ENCODE measurements at regions of chr22 and their contacts with region 1.

Region 1: GRCh38 chr22:45435544-45436139 is 22.1 kb downstream of the RIBC2 start:
- DNase-seq: peak; percentile 93
- H3K4me3 ChIP-seq: peak overlapping the region in 1 of 8 donors; percentile 20
- H3K27ac ChIP-seq: peak overlapping the region in 7 of 8 donors; percentile 21 to 62 (median 58)
- H3K4me1 ChIP-seq: peaks cover 8 to 15% (median 11%) of the 10 kb centered on the region in 6 donors
- H3K27me3 ChIP-seq: peaks cover 0 to 8% (median 0%) of the 10 kb centered on the region in 7 donors
- CTCF ChIP-seq: peak; percentile 96 to 99 (median 97)
- POLR2A ChIP-seq: no peak

Region 2: GRCh38 chr22:45240810-45241631 is 194.6 kb before region 1 on chr22 and contains the start of gene KIAA0930:
- intact Hi-C with region 1: no loop called
- DNase-seq: peak; percentile 96
- H3K4me3 ChIP-seq: peak within 1 kb of the TSS; percentile 54 to 91 (median 70)
- H3K27ac ChIP-seq: peak within 1 kb of the TSS; percentile 29 to 87 (median 74)
- H3K4me1 ChIP-seq: peaks cover 17 to 79% (median 47%) of the 10 kb centered on the region in 6 donors
- H3K27me3 ChIP-seq: no peaks in the 10 kb centered on the region
- CTCF ChIP-seq: no peak
- POLR2A ChIP-seq: no peak
- total RNA-seq, gene KIAA0930: 35.5 to 93.1 (median 73.7) TPM

Region 3: DNA sequence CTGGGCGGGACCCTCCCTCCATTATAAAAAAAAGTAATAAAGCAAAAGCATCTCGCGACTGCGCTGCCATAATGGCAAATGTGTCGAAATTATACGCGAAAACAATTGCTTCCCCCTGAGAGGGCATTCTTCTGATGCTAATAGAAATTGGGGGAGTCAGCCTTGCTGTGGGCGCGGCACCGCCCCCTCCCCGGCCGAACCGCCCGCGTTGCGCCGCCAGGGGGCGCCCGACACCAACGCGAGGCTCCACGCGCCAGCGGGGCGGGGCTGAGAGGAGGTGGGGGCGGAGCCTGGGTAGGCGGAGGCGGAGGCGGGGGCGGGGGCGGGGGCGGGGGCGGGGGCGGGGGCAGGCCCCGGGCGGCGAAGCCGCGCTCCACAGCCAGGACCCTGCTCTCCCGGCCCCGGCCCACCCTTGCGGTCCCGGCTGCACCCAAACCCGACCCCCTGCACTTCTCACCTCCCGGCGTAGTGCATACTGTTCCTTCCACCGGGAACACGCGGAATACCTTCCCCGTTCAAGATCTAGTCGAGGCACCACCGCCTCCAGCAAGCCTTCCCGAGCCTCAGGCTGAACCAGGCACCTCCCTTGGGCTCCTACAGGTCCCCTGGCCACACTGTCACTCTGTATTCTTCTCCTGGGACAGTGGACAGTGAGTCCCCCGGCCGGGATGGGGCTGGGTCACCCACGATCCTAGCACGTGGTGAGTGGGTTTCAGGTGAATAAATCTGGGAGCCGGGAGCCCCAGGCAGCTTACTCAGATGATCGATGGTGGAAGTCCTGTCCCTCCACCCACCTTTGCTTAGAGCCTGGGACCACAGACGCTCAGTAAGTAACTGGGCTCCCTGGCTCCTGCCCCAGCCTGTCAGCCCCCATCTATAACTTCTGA is 166.4 kb before region 1 on chr22:
- intact Hi-C with region 1: loop called (anchors 2 kb)
- DNase-seq: peak; percentile 98
- H3K4me3 ChIP-seq: peak overlapping the region; percentile 46 to 74 (median 58)
- H3K27ac ChIP-seq: peak overlapping the region in 3 of 8 donors; percentile 10 to 56 (median 51)
- H3K4me1 ChIP-seq: peaks cover 8 to 37% (median 23%) of the 10 kb centered on the region in 6 donors
- H3K27me3 ChIP-seq: peaks cover 0 to 27% (median 0%) of the 10 kb centered on the region in 7 donors
- CTCF ChIP-seq: peak; percentile 86 to 99 (median 96)
- POLR2A ChIP-seq: no peak